Heart left ventricle (tissue), 16 donors: ENCODE measurements at regions of chr17 and their contacts with region 1.

Region 1: GRCh38 chr17:49997791-49998703 is 3.0 kb upstream of the DLX3 start:
- DNase-seq: peak; percentile 73 to 80 (median 78)
- ATAC-seq: peak; percentile 77 to 82 (median 78)
- H3K4me3 ChIP-seq: no peak overlapping the region
- H3K27ac ChIP-seq: no peak overlapping the region
- H3K4me1 ChIP-seq: peaks cover 0 to 38% (median 23%) of the 10 kb centered on the region in 12 donors
- H3K27me3 ChIP-seq: peaks cover 33 to 96% (median 81%) of the 10 kb centered on the region in 9 donors
- CTCF ChIP-seq: peak; percentile 86 to 98 (median 95)
- POLR2A ChIP-seq: no peak

Region 2: DNA sequence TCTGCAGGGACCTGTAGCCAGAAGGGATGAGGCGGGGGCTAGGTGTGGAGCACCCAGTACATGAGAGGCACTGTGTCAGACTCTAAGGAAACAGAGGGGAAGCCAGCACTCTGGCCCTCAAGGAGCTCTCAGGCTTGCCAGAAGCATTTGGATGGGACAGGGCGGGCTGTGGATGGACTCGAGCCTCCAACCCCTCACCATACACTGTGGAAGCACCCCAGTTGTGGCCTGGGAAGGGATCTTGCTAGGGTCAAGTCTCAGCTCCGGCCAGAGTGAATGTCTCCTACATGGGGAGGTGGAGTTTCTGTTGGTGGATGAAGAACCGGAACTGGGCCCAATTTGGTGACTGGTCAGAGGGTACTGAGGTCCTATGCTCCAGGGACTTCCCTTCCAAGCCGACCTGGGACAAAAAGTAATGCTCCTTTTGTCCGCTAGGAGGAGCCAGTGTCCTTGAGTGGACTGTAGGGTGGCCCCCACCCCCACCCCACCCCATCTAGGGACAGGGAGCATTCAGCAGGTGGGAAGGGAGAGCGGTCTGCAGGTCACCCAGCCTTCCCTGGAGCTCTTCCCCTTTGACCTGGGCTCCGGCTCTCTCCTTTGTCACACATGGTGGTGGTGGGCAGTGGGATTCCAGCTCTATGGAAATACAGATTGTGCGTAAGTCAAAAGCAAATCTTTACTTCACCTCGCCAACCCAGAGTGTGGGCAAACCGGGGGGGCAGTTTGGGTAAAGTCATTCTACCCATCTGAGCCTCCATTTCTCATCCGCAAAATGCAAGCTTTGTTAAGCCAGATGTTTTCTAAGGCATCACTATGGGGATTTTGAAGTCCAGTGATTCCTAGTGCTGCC is 563.0 kb before region 1 on chr17:
- intact Hi-C with region 1: loop called in 1 of 10 experiments (anchors 10 kb)
- DNase-seq: peak in 1 of 5 donors; percentile 19
- ATAC-seq: peak; percentile 53 to 76 (median 66)
- H3K4me3 ChIP-seq: no peak overlapping the region
- H3K27ac ChIP-seq: no peak overlapping the region
- H3K4me1 ChIP-seq: no peaks in the 10 kb centered on the region
- H3K27me3 ChIP-seq: peaks cover 2 to 30% (median 19%) of the 10 kb centered on the region in 9 donors
- CTCF ChIP-seq: peak; percentile 53 to 80 (median 73)
- POLR2A ChIP-seq: no peak

Region 3: GRCh38 chr17:49567871-49568694 is 430.0 kb before region 1 on chr17:
- intact Hi-C with region 1: loop called in 9 of 10 experiments (anchors 2 to 10 kb)
- DNase-seq: peak; percentile 87 to 94 (median 92)
- ATAC-seq: peak; percentile 68 to 84 (median 76)
- H3K4me3 ChIP-seq: peak overlapping the region in 11 of 12 donors; percentile 8 to 60 (median 47)
- H3K27ac ChIP-seq: peak overlapping the region; percentile 59 to 92 (median 78)
- H3K4me1 ChIP-seq: peaks cover 0 to 42% (median 26%) of the 10 kb centered on the region in 12 donors
- H3K27me3 ChIP-seq: no peaks in the 10 kb centered on the region
- CTCF ChIP-seq: peak; percentile 87 to 98 (median 96)
- POLR2A ChIP-seq: no peak

Region 4: DNA sequence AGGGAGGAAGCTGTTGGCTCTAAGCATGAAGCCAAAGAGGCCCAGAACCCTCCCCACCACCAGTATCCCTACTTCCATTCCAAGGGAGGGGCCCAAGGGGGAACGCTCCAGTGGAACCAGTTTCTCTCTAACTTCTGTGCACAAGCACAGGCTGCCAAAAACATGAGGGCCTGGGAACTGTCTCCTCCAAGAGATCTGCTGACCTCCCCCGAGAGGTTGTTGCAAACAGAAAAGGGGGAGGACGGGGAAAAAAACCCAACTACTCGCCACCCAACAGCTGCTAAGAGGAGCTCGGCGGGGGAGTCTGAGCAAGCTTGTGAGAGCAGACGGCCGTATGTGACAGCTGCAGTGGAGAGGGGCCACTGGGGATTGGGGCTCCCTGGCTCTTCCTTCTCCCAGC is 274.6 kb before region 1 on chr17:
- intact Hi-C with region 1: loop called in 1 of 10 experiments (anchors 10 kb)
- DNase-seq: peak; percentile 77 to 91 (median 86)
- ATAC-seq: peak; percentile 81 to 86 (median 85)
- H3K4me3 ChIP-seq: no peak overlapping the region
- H3K27ac ChIP-seq: peak overlapping the region; percentile 47 to 85 (median 74)
- H3K4me1 ChIP-seq: peaks cover 0 to 57% (median 34%) of the 10 kb centered on the region in 12 donors
- H3K27me3 ChIP-seq: no peaks in the 10 kb centered on the region
- CTCF ChIP-seq: no peak
- POLR2A ChIP-seq: no peak

Region 5: GRCh38 chr17:49880291-49881053 is 117.6 kb before region 1 on chr17:
- intact Hi-C with region 1: loop called (anchors 2 to 5 kb)
- DNase-seq: peak; percentile 50 to 90 (median 67)
- ATAC-seq: peak; percentile 75 to 95 (median 90)
- H3K4me3 ChIP-seq: no peak overlapping the region
- H3K27ac ChIP-seq: no peak overlapping the region
- H3K4me1 ChIP-seq: peaks cover 0 to 10% (median 4%) of the 10 kb centered on the region in 12 donors
- H3K27me3 ChIP-seq: peaks cover 4 to 65% (median 26%) of the 10 kb centered on the region in 9 donors
- CTCF ChIP-seq: peak; percentile 82 to 98 (median 94)
- POLR2A ChIP-seq: no peak

Region 6: DNA sequence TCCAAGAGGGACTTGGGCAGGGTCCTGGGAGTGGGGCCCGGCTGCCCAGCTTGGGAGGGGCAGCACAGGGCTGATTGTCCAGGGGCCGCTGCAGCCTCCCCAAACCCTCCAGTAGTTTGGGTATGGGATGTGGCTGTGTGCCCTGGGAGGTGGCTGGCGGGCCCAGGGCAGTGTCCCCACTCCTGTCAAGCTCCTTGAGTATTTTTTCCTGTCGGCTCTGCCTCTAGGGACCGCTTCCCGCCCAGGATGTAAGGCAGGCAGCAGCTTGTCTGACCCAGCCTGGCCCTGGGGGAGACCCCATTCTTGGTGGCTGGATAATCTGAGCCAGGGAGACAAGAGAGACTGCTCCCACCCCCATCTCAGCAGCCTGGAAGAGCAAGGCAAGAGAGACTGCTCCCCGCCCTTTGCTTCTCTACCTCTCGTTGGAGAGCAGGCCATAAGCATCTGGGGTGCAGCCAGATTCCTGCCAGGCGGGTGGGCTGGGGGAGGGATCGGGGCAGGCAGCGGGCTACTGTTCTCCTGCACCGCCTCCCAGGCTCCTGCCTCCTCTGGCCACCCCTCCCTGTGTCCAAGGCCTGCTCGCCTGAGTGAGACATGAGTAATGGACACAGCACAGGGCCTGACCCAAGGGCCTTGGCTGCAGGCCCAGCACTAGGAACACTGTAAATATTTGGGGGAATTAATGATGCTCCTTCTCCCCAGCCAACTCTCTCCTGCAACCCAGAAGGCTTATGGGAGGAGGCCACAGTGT is 39.4 kb after region 1 on chr17:
- intact Hi-C with region 1: no loop called
- DNase-seq: peak in 2 of 5 donors; percentile 40 to 54
- ATAC-seq: peak; percentile 60 to 81 (median 70)
- H3K4me3 ChIP-seq: no peak overlapping the region
- H3K27ac ChIP-seq: peak overlapping the region in 1 of 12 donors; percentile 84
- H3K4me1 ChIP-seq: peaks cover 0 to 12% (median 0%) of the 10 kb centered on the region in 12 donors
- H3K27me3 ChIP-seq: no peaks in the 10 kb centered on the region
- CTCF ChIP-seq: no peak
- POLR2A ChIP-seq: no peak